ENCODE measurements at regions of chr1 and their contacts with region 1.

Region 1: DNA sequence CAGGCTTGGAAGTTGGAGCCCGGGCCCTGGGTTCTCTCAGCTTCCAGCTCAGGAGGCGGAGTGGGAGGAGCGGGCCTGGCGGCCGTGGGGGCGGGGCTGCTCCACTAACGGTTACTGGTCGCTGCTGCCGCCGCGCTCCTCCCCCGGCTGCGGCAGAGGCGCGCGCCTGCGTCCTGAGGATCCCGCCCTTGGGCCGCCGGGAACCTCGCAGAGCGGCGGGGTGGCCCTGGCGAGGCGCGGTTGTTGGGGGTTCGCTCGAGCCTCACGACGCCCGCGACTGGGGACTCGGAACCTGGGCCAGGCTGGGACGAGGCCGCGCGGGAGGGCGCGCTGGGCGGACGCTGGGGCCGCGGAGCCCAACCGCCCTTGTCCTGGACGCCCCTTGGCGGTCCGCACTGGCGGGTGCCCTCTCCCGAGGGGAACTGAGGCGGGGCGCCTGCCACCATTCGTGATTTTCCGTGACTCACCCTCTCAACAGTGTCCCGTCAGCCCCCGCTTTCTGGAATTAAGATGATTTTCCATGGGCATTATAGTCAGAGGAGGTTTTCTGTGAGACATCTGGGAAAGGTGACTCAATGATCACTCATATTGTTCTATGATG is 34.1 kb downstream of the OR2G3 start:
- DNase-seq: peak; percentile 96
- ATAC-seq: peak; percentile 99
- H3K4me3 ChIP-seq: peak overlapping the region; percentile 69
- H3K27ac ChIP-seq: peak overlapping the region; percentile 86
- H3K4me1 ChIP-seq: peaks cover 26% of the 10 kb centered on the region
- H3K27me3 ChIP-seq: peaks cover 9% of the 10 kb centered on the region; the same call in 1 of the 2 replicates
- CTCF ChIP-seq: no peak

Region 2: GRCh38 chr1:247528812-247529474 is 110.5 kb before region 1 on chr1:
- CTCF ChIA-PET with region 1: no interaction called
- POLR2A ChIA-PET with region 1: no interaction called
- intact Hi-C with region 1: loop called (anchors 1 kb)
- DNase-seq: peak; percentile 100
- ATAC-seq: peak; percentile 95
- H3K4me3 ChIP-seq: peak overlapping the region; percentile 3; the same call in 1 of the 2 replicates
- H3K27ac ChIP-seq: peak overlapping the region; percentile 71
- H3K4me1 ChIP-seq: peaks cover 23% of the 10 kb centered on the region
- H3K27me3 ChIP-seq: no peaks in the 10 kb centered on the region
- CTCF ChIP-seq: peak; percentile 42